HAP-1 (cell line): ENCODE measurements at regions of chr6 and their contacts with region 1.

Region 1: GRCh38 chr6:157873735-157874344 is 50.8 kb downstream of the SNX9 start:
- DNase-seq: peak; percentile 32 to 85
- H3K4me3 ChIP-seq: no peak overlapping the region
- H3K4me1 ChIP-seq: no peaks in the 10 kb centered on the region; the same call in 1 of the 2 replicates
- H3K27me3 ChIP-seq: no peaks in the 10 kb centered on the region

Region 2: DNA sequence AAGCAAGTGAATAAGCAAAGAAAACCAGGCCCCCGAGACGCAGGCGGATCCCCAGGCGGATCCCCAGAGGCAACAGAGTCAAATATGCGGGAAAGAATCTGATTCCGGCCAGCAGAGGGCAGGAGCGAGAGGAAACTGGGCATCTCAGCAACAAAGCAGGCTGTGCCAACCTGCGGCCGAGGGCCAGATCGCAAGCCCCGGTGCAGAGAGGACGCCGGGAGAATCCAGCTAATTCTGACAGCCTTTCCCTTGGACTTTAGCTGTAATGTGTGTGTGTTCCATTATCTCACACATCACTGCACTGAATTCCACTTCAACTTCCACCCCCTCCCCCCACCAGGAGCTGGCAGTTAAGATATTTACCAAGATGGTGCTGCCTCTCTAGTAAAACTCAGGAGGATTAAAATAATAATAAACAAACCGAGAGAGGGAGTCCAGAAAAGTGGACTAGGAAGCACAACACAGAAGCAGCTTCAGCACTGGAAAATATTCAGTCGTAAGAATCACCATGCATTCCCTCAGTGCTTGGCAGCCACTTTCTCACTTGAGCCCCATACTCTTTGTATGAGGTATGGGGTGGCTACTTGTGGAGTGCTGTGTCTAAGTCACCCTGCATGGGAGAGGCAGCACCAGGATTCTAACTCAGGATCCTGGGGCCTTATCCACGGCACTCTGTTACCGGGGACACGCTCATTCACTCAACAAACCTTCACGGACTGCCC is 117.0 kb before region 1 on chr6:
- in situ Hi-C with region 1: loop called (anchors 5 kb)
- DNase-seq: peak; percentile 55 to 90
- H3K4me3 ChIP-seq: no peak overlapping the region
- H3K4me1 ChIP-seq: peaks cover 29% of the 10 kb centered on the region
- H3K27me3 ChIP-seq: peaks cover 17% of the 10 kb centered on the region